Right ventricle myocardium superior (tissue), 1 donor: ENCODE measurements at regions of chr3 and their contacts with region 1.

Region 1: DNA sequence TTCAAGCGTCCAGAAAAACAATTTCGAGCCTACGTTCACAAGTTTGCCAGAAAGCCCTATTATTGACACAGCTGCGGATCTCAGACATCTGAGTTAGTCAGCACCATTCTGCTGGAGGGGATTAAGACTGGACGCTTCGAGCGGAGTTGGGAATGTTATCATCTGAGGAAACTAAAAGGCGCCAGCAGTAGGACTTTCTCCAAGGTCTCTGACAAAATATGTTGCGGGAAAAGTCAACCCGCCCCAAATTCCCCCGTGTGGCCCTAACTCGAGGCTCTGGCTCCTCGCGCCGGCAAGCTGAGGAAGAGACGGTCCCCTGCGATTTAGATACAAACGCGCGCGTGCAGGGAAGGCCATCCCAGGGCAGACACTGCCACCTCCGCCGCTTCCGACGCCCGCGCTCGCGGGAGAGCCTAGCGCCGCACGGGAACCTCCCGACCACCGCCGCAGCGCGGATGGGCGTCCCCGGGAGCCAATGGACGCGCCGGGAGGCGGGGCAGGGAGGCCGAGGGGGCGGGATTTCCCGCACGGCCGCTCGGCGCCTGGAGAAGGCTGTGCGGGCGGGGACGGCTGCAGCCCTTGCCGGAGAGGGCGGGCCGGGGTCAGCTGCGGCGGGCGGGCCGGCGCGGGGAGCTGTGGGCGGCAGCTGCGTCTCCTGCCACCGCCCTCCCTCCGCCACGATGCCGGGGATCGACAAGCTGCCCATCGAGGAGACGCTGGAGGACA is at the start of gene APPL1:
- DNase-seq: peak; percentile 96
- ATAC-seq: peak; percentile 98
- total RNA-seq, gene APPL1: 42.9 TPM

Region 2: DNA sequence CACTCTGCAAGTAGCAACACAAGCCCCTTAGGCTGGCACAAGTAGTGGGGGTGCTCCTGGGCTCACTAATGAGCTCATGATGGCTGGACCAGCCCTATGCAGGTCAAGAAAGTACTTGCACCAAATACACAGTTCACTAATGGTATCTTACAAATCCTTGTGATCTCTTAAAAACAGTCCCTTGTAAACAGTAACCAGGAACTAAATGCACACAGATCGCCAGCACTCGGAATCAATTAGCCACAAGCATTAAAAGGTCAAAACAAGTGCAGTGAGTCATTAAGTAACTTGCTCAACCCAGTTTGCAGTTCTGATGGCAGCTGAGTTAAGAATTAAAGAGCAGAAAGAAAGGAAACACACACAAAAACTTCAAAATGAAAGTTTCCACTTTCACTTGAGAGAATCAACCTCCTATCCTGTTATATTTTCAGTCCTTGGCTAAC is 468.8 kb before region 1 on chr3:
- intact Hi-C with region 1: no loop called
- DNase-seq: no peak
- ATAC-seq: peak; percentile 42

Region 3: GRCh38 chr3:57100046-57100695 is 127.2 kb before region 1 on chr3:
- intact Hi-C with region 1: loop called (anchors 5 kb)
- DNase-seq: no peak
- ATAC-seq: peak; percentile 89

Region 4: DNA sequence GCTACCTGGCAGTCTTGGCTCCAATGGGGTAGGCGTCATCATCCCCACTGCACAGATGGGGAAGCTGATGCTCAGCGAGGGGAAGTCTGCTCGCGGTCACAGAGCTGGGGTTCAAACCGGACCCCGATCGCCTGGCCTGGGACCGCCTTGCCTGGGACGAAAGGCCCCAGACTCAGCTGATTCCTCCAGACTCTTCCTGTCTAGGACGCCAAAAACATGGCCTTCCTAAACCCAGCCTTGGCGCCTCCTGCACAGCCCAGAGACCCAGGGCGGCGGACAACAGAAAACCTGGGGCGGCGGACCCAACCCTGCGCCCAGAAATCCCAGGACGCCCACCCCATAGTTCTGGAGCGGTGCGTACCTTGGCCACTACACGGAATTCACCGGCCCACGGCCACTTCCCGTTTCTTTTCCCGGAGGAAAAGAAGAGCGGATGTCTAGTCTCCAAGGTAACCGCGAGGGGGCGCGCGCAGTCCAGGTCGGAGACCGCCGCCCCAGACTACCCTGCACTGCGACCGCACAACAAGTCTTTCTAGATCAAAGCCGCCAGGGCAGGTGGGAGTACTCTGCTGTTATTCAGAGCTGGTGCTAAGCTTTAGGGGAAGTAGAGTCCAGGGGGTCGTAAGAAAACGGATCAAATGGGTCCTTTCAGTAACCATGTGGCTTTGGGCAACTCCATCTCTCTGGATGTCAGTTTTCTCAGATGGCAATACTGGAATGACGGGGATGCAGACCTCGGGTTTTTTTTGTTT is 57.3 kb before region 1 on chr3:
- intact Hi-C with region 1: loop called (anchors 5 kb)
- DNase-seq: peak; percentile 85
- ATAC-seq: peak; percentile 83

Region 5: DNA sequence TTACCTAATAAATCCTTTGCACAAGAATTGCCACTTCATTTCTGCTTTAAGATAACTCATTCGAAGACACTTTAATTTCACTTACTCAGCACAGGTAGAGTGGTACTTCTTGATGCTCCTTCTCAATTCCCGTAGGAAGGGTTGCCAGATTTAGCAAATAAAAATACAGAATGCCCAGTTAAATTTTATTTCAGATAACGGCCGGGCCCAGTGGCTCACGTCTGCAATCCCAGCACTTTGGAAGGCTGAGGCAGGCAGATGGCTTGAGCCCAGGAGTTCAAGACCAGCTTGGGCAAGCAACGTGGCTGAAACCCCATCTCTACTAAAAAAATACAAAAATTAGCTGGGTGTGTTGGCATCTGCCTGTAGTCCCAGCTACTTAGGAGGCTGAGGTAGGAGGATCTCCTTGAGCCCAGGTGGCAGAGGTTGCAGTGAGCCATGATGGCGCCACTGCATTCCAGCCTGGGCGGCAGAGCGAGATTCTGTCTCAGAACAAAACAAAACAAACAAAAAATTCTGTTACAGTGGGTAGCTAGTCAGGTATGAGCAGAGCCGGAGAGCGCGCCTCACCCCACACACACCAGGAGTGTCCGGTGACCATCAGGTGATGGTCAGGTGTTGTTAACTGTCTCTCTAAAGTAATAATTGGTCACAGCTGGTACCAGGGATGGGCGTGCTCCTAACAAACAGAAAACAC is 223.9 kb after region 1 on chr3:
- intact Hi-C with region 1: no loop called
- DNase-seq: no peak
- ATAC-seq: no peak

Region 6: GRCh38 chr3:57555738-57556458 is 328.5 kb after region 1 on chr3 and contains the start of gene PDE12:
- intact Hi-C with region 1: no loop called
- DNase-seq: peak; percentile 89
- ATAC-seq: peak; percentile 97
- total RNA-seq, gene PDE12: 9.0 TPM